T-cell (primary cell): ENCODE measurements at regions of chr12 and their contacts with region 1.

Region 1: GRCh38 chr12:15532364-15532977 is 210.2 kb downstream of the PTPRO start:
- DNase-seq: peak in 34 of 35 experiments; percentile 10 to 76 (median 41)
- ATAC-seq: peak; percentile 74 to 86 (median 80)
- H3K4me3 ChIP-seq: no peak overlapping the region
- H3K4me3 Mint-ChIP-seq: peak overlapping the region in 1 of 3 donors; percentile 24
- H3K27ac ChIP-seq: no peak overlapping the region
- H3K27ac Mint-ChIP-seq: peak overlapping the region; percentile 73 to 75
- H3K4me1 ChIP-seq: peaks cover 3 to 16% of the 10 kb centered on the region in 2 experiments
- H3K4me1 Mint-ChIP-seq: peaks cover 0 to 7% (median 0%) of the 10 kb centered on the region in 3 donors
- H3K27me3 ChIP-seq: no peaks in the 10 kb centered on the region
- H3K27me3 Mint-ChIP-seq: no peaks in the 10 kb centered on the region

Region 2: DNA sequence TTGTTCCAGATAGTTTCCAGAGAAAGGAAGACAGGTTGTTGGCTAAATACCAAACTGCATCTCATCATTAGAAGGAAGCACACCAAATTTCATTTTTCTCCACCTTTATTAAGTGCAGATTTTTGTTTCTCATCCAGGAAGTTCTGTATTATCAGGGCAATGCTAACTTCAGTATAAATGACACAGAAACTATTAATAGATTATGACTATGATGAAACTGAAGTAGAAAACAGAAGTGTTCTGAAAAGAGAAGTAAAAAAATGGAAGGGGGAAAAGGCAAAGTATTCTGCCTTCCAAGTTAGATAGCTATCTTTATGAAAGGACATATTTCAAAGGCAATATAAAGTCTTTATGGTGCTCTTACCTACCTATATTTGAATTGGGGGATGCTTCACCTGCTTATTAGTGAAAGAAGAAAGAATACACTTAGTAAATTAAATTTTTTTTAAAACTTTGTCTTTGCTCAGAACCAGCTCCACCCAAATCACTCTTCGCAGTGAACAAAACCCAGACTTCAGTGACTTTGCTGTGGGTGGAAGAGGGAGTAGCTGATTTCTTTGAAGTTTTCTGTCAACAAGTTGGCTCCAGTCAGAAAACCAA is 13.7 kb after region 1 on chr12:
- CTCF ChIA-PET with region 1: interaction called, 8 to 23 read pairs
- POLR2A ChIA-PET with region 1: interaction called, 3 read pairs
- DNase-seq: peak in 29 of 35 experiments; percentile 15 to 73 (median 38)
- ATAC-seq: peak; percentile 95 to 99 (median 96)
- H3K4me3 ChIP-seq: no peak overlapping the region
- H3K4me3 Mint-ChIP-seq: peak overlapping the region; percentile 43 to 63 (median 52)
- H3K27ac ChIP-seq: peak overlapping the region; percentile 85
- H3K27ac Mint-ChIP-seq: peak overlapping the region; percentile 96 to 97
- H3K4me1 ChIP-seq: peaks cover 18 to 27% of the 10 kb centered on the region in 2 experiments
- H3K4me1 Mint-ChIP-seq: peaks cover 67 to 76% (median 67%) of the 10 kb centered on the region in 3 donors
- H3K27me3 ChIP-seq: no peaks in the 10 kb centered on the region
- H3K27me3 Mint-ChIP-seq: no peaks in the 10 kb centered on the region

Region 3: GRCh38 chr12:15575671-15576541 is 43.4 kb after region 1 on chr12:
- CTCF ChIA-PET with region 1: interaction called, 85 to 211 read pairs
- POLR2A ChIA-PET with region 1: interaction called in 1 of 2 experiments, 3 read pairs
- DNase-seq: no peak
- ATAC-seq: no peak
- H3K4me3 ChIP-seq: no peak overlapping the region
- H3K4me3 Mint-ChIP-seq: no peak overlapping the region
- H3K27ac ChIP-seq: no peak overlapping the region
- H3K27ac Mint-ChIP-seq: peak overlapping the region; percentile 5 to 63
- H3K4me1 ChIP-seq: peaks cover 4 to 7% of the 10 kb centered on the region in 2 experiments
- H3K4me1 Mint-ChIP-seq: peaks cover 20 to 36% (median 26%) of the 10 kb centered on the region in 3 donors
- H3K27me3 ChIP-seq: no peaks in the 10 kb centered on the region
- H3K27me3 Mint-ChIP-seq: no peaks in the 10 kb centered on the region

Region 4: DNA sequence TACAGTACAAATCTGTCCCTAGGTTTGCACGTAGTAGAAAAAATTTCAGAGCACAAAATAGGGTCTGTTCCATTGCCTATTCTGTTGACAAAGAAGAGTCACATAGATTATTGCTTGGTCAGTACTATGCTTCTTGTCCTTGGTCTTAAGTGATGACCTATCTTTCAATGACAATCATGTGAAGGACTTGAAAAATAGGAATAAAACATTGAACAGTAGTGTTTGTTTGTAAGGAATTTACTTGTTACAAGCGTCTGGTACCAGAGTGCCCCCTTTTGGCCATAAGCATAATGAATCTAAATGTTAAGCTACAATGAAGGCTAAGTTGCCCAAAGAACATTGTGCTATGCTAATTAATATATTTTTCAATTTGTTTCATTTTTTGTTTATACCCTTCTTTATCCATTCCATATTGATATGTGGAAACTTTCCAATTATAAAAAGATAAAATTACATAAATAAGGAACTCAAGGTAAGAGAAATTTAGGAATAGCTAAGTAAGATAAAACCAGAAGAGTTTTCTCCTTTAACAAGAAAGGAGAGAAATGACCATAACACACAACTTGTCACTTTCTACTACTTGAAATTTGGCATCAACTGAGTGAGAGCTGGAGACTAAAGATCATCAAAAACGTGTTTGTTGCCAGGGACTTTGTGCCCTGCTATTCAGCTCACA is 52.0 kb after region 1 on chr12:
- CTCF ChIA-PET with region 1: interaction called, 85 to 211 read pairs
- POLR2A ChIA-PET with region 1: interaction called, 3 read pairs
- DNase-seq: peak in 21 of 35 experiments; percentile 8 to 82 (median 25)
- ATAC-seq: peak; percentile 50 to 66 (median 55)
- H3K4me3 ChIP-seq: no peak overlapping the region
- H3K4me3 Mint-ChIP-seq: no peak overlapping the region
- H3K27ac ChIP-seq: no peak overlapping the region
- H3K27ac Mint-ChIP-seq: peak overlapping the region in 1 of 2 donors; percentile 28
- H3K4me1 ChIP-seq: no peaks in the 10 kb centered on the region
- H3K4me1 Mint-ChIP-seq: peaks cover 12 to 18% (median 14%) of the 10 kb centered on the region in 3 donors
- H3K27me3 ChIP-seq: no peaks in the 10 kb centered on the region
- H3K27me3 Mint-ChIP-seq: no peaks in the 10 kb centered on the region

Region 5: GRCh38 chr12:15590180-15590826 is 57.8 kb after region 1 on chr12:
- CTCF ChIA-PET with region 1: interaction called, 85 to 211 read pairs
- POLR2A ChIA-PET with region 1: no interaction called
- DNase-seq: peak in 32 of 35 experiments; percentile 4 to 79 (median 24)
- ATAC-seq: peak; percentile 90 to 98 (median 96)
- H3K4me3 ChIP-seq: peak overlapping the region in 1 of 2 donors; percentile 57
- H3K4me3 Mint-ChIP-seq: peak overlapping the region; percentile 67 to 85 (median 72)
- H3K27ac ChIP-seq: no peak overlapping the region
- H3K27ac Mint-ChIP-seq: peak overlapping the region; percentile 64 to 76
- H3K4me1 ChIP-seq: peaks cover 2 to 4% of the 10 kb centered on the region in 2 experiments
- H3K4me1 Mint-ChIP-seq: peaks cover 10% of the 10 kb centered on the region in 3 donors
- H3K27me3 ChIP-seq: no peaks in the 10 kb centered on the region
- H3K27me3 Mint-ChIP-seq: peaks cover 0 to 4% of the 10 kb centered on the region in 2 donors

Region 6: DNA sequence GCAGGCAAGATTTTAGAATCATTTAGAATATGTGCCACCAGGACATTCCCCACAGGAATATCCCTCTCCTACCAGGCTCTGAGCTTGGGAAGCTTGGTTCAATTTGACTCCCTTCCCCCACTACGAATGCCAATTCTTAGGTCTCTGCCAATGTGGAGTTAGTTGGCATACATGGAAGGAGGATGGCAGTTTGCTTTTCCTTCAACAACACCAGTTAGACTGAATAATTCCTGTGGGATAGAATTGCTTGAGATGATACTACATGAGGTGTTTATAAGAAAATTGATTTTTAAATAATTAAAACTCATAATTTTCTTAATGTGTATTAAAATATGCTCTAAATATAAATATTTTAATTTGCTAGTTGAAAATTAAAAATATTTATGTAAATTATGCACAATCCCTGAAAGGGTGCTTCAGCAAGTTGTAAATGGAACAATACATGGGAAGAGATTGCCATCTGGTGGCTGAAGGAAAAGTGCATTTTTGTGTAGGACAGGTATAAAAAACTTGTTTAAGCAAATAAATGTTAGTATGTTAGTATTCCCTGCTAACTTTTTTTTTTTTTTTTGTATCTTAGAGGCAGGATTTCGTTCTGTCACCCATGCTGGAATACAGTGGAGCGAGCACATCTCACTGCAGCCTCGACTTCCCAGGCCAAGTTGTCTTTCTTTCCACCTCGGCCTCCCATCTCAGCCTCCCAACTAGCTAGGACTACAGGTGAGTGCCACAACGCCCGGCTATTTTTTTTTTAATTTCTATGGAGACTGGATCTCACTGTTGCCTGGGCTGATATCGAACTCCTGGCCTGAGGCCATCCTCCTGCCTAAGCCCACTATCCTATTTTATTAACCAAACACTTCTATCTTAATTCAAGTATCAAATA is 323.9 kb after region 1 on chr12:
- CTCF ChIA-PET with region 1: interaction called, 5 to 23 read pairs
- POLR2A ChIA-PET with region 1: no interaction called
- DNase-seq: peak in 21 of 35 experiments; percentile 14 to 79 (median 36)
- ATAC-seq: peak in 3 of 4 experiments; percentile 45 to 64 (median 48)
- H3K4me3 ChIP-seq: no peak overlapping the region
- H3K4me3 Mint-ChIP-seq: no peak overlapping the region
- H3K27ac ChIP-seq: no peak overlapping the region
- H3K27ac Mint-ChIP-seq: no peak overlapping the region
- H3K4me1 ChIP-seq: no peaks in the 10 kb centered on the region
- H3K4me1 Mint-ChIP-seq: no peaks in the 10 kb centered on the region
- H3K27me3 ChIP-seq: no peaks in the 10 kb centered on the region
- H3K27me3 Mint-ChIP-seq: peaks cover 13 to 17% of the 10 kb centered on the region in 2 donors

Region 7: GRCh38 chr12:16062611-16063010 is 530.1 kb after region 1 on chr12:
- CTCF ChIA-PET with region 1: no interaction called
- POLR2A ChIA-PET with region 1: no interaction called
- DNase-seq: no peak
- ATAC-seq: no peak
- H3K4me3 ChIP-seq: no peak overlapping the region
- H3K4me3 Mint-ChIP-seq: no peak overlapping the region
- H3K27ac ChIP-seq: no peak overlapping the region
- H3K27ac Mint-ChIP-seq: no peak overlapping the region
- H3K4me1 ChIP-seq: no peaks in the 10 kb centered on the region
- H3K4me1 Mint-ChIP-seq: no peaks in the 10 kb centered on the region
- H3K27me3 ChIP-seq: no peaks in the 10 kb centered on the region
- H3K27me3 Mint-ChIP-seq: no peaks in the 10 kb centered on the region